Sigmoid colon (tissue), 7 donors: ENCODE measurements at regions of chr6 and their contacts with region 1.

Region 1: DNA sequence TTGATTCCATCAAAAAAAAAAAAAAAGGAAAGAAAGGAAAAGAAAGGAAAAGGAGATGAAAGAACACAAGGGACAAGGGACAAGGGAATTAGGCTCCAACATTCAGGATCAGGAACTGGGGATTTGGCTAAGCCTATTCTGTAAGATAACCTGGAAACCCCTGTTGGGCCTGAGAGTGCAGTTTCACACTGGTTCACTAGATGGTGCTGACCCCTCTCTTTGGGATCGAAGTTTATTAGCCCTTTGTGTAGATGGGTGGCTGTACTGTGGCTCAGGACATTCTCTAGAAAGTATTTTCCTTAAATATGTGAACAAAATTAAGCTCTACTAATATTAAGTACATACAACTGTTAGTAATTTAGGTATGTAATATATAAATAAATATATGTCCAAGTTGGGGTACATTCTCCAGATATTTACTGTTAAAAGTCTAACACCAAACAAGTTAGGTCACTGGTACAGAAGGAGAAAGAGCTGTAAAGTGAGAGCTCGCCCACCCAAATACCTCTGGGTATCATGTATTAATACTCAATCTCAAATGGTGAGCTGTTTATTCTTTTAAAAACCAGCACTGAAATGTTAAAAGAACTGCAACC is 6.3 kb downstream of the OR2A4 start:
- DNase-seq: no peak
- H3K4me3 ChIP-seq: no peak overlapping the region
- H3K27ac ChIP-seq: no peak overlapping the region
- H3K4me1 ChIP-seq: no peaks in the 10 kb centered on the region
- H3K27me3 ChIP-seq: no peaks in the 10 kb centered on the region
- CTCF ChIP-seq: peak in 3 of 4 experiments; percentile 42 to 57 (median 44)
- EP300 ChIP-seq: no peak
- POLR2A ChIP-seq: no peak

Region 2: DNA sequence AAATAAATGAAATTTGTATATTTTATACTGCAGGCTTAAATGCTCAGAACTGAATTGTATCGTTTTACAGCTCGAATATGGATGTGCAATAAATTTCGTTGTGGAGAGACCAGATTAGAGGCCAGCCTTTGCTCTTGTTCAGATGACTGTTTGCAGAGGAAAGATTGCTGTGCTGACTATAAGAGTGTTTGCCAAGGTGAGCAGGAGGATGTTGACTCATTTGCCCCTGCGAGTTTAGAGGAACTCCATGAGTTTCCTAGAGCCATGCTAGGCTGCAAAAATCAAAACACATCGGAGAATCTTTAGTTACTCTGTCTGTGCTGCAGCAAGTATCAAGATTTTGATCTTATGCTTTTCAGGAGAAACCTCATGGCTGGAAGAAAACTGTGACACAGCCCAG is 42.5 kb before region 1 on chr6:
- intact Hi-C with region 1: no loop called
- DNase-seq: no peak
- H3K4me3 ChIP-seq: no peak overlapping the region
- H3K27ac ChIP-seq: no peak overlapping the region
- H3K4me1 ChIP-seq: no peaks in the 10 kb centered on the region
- H3K27me3 ChIP-seq: no peaks in the 10 kb centered on the region
- CTCF ChIP-seq: no peak
- EP300 ChIP-seq: no peak
- POLR2A ChIP-seq: no peak

Region 3: DNA sequence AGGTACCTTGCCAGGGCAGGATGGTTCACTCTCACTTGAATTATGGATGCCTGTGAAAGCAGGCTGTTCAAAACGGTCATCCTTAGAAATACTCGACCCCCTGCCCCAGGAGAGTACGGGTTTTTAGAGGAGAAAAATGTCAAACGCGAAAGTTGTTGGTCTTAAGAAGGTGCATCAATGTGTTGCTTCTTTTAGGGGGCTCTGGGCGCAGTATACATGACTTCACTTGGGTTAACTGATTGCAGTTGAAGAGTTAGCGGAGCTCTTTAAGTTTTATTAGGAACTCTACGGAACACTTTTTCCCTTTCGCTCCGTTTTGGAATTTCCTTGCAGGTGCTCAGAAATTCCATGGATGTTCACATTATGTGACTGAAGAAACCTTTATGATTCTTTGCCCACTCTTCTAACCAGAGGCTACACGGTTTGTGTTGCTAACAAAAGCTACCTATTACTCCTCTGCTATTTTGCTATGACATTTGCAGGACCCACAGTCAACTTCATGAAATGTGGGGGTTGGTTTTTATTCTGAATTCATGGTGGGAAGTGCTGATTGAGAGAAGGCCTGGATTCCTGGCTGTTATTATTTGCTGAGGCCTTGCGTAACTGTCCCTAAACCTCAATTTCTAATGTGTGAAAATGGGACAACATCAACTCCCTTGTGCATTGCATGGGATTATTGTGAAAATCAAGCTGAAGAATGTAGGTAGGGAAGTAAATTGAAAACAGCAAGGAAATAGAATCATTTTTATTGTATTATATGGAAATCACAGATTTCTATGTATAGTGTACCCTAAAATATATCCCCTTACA is 113.7 kb after region 1 on chr6:
- intact Hi-C with region 1: no loop called
- DNase-seq: no peak
- H3K4me3 ChIP-seq: peak overlapping the region; percentile 42 to 68 (median 66)
- H3K27ac ChIP-seq: peak overlapping the region; percentile 72 to 74 (median 73)
- H3K4me1 ChIP-seq: peaks cover 0 to 8% (median 6%) of the 10 kb centered on the region in 4 donors
- H3K27me3 ChIP-seq: no peaks in the 10 kb centered on the region
- CTCF ChIP-seq: no peak
- EP300 ChIP-seq: no peak
- POLR2A ChIP-seq: no peak

Region 4: GRCh38 chr6:131909408-131910218 is 214.7 kb after region 1 on chr6:
- intact Hi-C with region 1: loop called (anchors 10 kb)
- DNase-seq: peak; percentile 72
- H3K4me3 ChIP-seq: no peak overlapping the region
- H3K27ac ChIP-seq: no peak overlapping the region
- H3K4me1 ChIP-seq: no peaks in the 10 kb centered on the region
- H3K27me3 ChIP-seq: peaks cover 0 to 8% (median 0%) of the 10 kb centered on the region in 3 donors
- CTCF ChIP-seq: peak; percentile 15 to 89 (median 71)
- EP300 ChIP-seq: no peak
- POLR2A ChIP-seq: no peak